Right ventricle myocardium inferior (tissue), 1 donor: ENCODE measurements at regions of chr22 and their contacts with region 1.

Region 1: DNA sequence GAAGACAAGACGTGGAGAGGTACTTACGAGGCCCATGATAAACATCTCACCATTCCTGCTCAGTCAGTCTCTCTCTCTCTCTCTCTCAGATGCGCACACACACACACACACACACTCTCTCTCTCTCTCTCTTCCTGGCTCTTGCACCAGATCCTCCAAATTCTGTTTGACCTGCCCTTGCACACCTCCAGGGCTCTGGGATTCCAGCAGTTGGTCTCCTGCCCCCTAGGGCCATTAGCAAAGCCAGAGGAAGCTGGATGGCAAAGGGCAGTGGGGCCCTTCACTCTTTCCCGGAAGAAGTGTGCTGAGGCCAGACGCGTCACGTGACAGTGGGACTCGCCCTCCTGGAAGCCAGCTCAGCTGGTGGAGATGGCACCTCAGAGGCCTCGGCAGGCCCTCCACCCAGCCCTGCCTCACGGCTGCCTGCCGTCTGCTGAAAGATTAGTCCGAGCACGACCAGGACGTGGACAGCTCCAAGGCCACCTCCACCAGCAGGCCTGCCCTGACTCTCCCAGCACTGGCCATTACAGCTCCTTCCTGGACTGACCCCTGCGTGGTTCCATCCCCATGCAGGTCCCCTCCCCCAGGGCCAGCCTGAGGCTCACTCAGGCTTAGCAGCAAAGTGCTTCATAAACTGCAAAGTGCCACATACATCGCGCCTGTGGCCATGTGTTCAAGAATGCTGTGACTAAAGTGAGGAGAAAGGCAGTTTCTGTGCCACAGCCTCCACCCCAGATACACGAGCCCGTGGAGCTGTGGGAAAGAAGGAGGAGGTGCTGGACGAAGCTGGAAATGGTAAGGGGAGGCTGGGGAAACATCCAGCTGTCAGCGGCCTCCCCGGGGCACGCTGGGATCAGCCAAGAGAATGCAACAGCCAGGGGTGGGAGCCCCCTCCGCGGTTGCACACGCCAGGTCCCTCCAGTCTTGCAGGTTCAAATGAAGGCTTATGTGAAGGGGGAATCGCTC is 3.7 kb downstream of the PDGFB start:
- DNase-seq: no peak
- ATAC-seq: no peak

Region 2: GRCh38 chr22:39205338-39206021 is 35.6 kb before region 1 on chr22:
- intact Hi-C with region 1: no loop called
- DNase-seq: no peak
- ATAC-seq: no peak

Region 3: GRCh38 chr22:39292561-39293098 is 51.5 kb after region 1 on chr22:
- intact Hi-C with region 1: loop called (anchors 5 kb)
- DNase-seq: peak; percentile 95
- ATAC-seq: peak; percentile 83